Activated CD4-positive, alpha-beta T cell treated with anti-CD3 and anti-CD28 coated beads, Interleukin-2, amount 10 ng/mL, durations not matched to agents 24 days and 14 days (primary cell): ENCODE measurements at regions of chr1 and their contacts with region 1.

Region 1: DNA sequence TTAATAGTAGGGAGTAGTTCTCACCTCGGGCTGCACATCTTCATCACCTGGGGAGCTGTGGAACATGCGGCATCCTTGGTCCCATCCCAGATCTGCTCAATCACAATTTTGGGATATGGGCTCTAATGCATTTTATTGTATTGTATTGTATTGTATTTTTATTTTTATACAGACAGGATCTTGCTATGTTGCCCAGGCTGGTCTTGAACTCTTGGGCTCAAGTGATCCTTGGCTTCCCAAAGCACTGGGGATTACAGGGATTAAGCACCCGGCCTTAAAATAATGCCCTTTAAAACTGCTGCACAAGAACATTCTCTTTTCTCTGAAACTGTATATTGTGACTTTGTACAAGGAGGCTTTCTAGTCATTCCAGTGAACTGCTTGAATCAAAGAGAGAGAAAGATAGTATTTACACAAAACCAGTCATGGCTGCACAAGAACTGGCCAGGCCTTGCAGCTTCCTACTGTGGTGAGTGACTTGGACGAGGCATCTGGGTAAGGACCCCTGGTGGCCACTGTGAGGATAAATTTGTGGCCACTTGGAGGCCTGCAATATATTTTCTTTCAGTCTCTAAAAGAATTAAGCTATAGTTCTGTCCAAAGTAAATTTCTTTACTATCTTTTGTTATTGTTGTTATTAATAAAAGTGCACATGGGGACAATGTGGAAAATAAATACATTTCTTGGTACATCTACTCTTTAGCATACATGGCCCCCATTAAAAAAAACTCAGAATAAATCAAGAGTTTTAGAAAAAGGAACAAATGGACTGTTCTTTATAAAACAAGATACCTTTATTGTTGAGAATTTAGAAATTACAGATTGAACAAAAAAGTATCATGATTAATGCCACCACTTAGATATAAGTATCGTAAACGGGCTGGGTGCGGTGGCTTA is 48.0 kb downstream of the TBCE start:
- DNase-seq: peak; percentile 87
- H3K4me3 Mint-ChIP-seq: no peak overlapping the region
- H3K27ac Mint-ChIP-seq: no peak overlapping the region
- H3K4me1 Mint-ChIP-seq: peaks cover 6% of the 10 kb centered on the region
- H3K27me3 Mint-ChIP-seq: no peaks in the 10 kb centered on the region

Region 2: DNA sequence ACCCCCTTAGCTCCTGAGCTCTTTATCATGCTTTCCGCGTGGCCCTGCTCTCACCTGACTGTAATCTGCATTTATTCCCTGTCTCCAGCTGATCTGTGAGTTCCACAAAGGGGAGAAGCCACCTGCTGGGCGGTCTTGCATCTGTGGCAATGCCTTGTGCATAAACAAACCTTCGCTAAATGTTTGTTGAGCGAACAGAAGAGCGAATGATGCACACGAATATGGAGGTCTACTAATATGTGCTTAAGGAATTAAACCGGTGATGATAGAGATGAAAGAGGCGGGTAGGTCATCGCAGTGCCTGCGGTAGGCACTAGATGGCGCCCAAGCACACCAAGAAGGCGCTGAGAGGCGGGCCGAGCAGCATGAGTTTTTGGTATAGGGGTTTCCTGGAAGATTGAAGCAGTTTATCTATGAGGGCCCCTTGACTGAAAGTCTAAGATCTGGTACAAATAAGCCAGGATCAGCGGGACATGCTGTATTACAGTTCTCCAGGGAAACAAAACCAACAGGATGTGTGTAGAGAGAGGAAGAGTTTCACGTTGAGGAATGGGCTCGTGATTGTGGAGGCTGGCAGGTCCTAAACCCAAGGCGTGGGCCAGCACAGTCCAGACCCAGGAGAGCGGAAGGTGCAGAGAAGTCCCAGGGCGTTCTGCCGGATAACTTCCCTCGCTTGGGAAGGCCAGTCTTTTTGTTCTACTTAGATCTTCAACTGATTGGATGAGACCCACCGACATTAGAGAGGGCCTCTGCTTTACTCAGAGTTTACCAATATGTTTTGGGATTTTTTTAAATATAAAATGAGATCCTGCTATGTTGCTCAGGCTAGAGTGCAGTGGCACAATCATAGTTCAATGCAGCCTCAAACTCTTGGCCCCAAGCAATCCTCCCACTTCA is 321.3 kb before region 1 on chr1:
- intact Hi-C with region 1: loop called (anchors 2 kb)
- DNase-seq: peak; percentile 96
- H3K4me3 Mint-ChIP-seq: peak overlapping the region; percentile 30
- H3K27ac Mint-ChIP-seq: peak overlapping the region; percentile 15
- H3K4me1 Mint-ChIP-seq: peaks cover 9% of the 10 kb centered on the region
- H3K27me3 Mint-ChIP-seq: no peaks in the 10 kb centered on the region

Region 3: GRCh38 chr1:235160957-235161684 is 254.1 kb before region 1 on chr1 and contains the start of gene RBM34:
- intact Hi-C with region 1: loop called (anchors 1 kb)
- DNase-seq: peak; percentile 98
- H3K4me3 Mint-ChIP-seq: peak within 1 kb of the TSS; percentile 93
- H3K27ac Mint-ChIP-seq: peak within 1 kb of the TSS; percentile 94
- H3K4me1 Mint-ChIP-seq: peaks cover 12% of the 10 kb centered on the region
- H3K27me3 Mint-ChIP-seq: no peaks in the 10 kb centered on the region
- total RNA-seq, gene RBM34: 123 and 135 TPM in 2 replicates

Region 4: DNA sequence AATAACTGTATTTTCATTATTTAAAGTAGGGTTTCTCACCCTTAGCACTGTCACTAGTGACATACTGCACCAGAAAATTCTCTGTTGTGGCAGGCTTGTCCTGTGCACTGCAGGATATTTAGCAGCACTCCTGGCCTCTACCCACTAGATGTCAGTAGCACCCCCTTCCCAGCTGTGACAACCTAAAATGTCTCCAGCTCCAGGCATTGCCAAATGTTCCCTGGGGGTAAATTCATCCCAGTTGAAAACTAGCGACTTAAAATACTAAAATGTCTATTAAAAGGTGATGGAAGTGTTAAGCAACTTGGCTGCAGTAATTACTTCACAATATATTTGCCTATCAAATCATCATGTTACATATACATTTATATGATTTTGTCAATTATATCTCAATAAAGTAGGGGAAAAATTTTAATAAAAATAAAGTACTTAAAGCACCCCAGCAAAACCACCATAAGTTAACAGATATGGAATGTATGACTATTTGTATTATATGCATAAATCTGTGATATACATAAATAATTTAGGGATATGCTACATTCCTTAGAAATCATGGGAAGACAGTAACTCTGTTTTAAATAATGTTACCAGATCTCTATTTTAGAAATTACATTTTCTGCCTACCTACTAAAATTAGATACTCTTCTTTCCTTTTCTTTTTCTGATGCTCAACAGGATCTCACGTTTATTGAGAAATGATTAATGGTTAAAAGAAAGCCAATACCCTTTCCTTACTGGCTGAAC is 161.9 kb before region 1 on chr1:
- intact Hi-C with region 1: loop called (anchors 1 kb)
- DNase-seq: peak; percentile 88
- H3K4me3 Mint-ChIP-seq: no peak overlapping the region
- H3K27ac Mint-ChIP-seq: no peak overlapping the region
- H3K4me1 Mint-ChIP-seq: peaks cover 21% of the 10 kb centered on the region
- H3K27me3 Mint-ChIP-seq: no peaks in the 10 kb centered on the region